ENCODE measurements at regions of chr4 and their contacts with region 1.

Region 1: DNA sequence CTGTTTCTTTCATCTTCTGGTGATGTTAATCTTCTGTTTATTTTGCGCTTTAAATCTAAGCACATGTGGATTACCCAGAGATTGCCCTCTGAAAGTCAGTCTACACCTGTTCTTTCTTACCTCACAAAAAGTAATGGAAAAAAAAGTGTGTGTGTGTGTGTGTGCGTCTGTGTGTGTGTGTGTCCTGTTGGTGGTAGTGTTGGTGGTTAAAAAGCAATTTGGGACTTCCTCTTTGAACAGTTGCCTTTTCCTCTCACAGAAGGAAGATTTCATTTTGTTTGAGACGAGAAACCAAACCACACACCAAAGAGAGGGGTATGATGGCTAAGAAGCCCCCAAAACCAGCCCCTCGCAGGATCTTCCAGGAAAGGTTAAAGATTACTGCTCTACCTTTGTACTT is at the start of gene STAP1:
- DNase-seq: peak in 2 of 9 experiments; percentile 40 to 61
- ATAC-seq: peak; percentile 56
- H3K4me3 ChIP-seq: peak within 1 kb of the TSS in 1 of 2 experiments; percentile 35
- H3K4me3 Mint-ChIP-seq: peak within 1 kb of the TSS; percentile 73
- H3K27ac ChIP-seq: no peak within 1 kb of the TSS
- H3K27ac Mint-ChIP-seq: peak within 1 kb of the TSS; percentile 65
- H3K4me1 ChIP-seq: peaks cover 10% of the 10 kb centered on the region
- H3K4me1 Mint-ChIP-seq: peaks cover 15% of the 10 kb centered on the region
- H3K27me3 ChIP-seq: no peaks in the 10 kb centered on the region
- H3K27me3 Mint-ChIP-seq: no peaks in the 10 kb centered on the region
- CTCF ChIP-seq: no peak
- total RNA-seq, gene STAP1: 1.0 to 1.3 TPM

Region 2: DNA sequence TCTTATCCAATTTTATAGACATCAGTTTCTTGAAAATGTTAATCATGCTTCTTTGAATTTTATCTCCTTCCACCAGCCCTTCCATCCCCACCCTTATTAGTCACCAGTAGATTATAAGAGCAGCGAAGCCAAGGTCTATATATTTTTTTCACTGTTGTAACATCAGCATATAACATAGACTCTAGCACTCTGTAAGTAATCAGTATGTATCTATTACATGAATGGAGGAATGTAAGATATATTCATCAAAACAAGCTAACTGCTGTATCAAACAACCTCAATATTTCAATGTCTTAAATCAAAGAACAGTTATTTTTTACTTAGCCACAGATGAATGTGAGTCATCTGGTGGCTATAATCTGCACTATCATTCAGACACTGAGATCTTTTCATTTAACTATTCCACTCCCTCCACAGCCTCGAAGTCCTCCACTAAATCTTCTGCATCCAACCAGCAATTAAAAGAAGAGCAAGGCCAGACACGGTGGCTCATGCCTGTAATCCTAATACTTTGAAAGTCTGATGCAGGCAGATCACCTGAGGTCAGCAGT is 192.1 kb before region 1 on chr4:
- CTCF ChIA-PET with region 1: no interaction called
- POLR2A ChIA-PET with region 1: no interaction called
- intact Hi-C with region 1: no loop called
- DNase-seq: no peak
- ATAC-seq: no peak
- H3K4me3 ChIP-seq: no peak overlapping the region
- H3K4me3 Mint-ChIP-seq: no peak overlapping the region
- H3K27ac ChIP-seq: no peak overlapping the region
- H3K27ac Mint-ChIP-seq: no peak overlapping the region
- H3K4me1 ChIP-seq: no peaks in the 10 kb centered on the region
- H3K4me1 Mint-ChIP-seq: no peaks in the 10 kb centered on the region
- H3K27me3 ChIP-seq: no peaks in the 10 kb centered on the region
- H3K27me3 Mint-ChIP-seq: peaks cover 17% of the 10 kb centered on the region
- CTCF ChIP-seq: no peak

Region 3: GRCh38 chr4:67573193-67573592 is 14.7 kb after region 1 on chr4:
- CTCF ChIA-PET with region 1: no interaction called
- POLR2A ChIA-PET with region 1: no interaction called
- intact Hi-C with region 1: loop called in 1 of 2 experiments (anchors 2 kb)
- DNase-seq: no peak
- ATAC-seq: no peak
- H3K4me3 ChIP-seq: no peak overlapping the region
- H3K4me3 Mint-ChIP-seq: no peak overlapping the region
- H3K27ac ChIP-seq: no peak overlapping the region
- H3K27ac Mint-ChIP-seq: peak overlapping the region; percentile 8
- H3K4me1 ChIP-seq: peaks cover 8% of the 10 kb centered on the region
- H3K4me1 Mint-ChIP-seq: peaks cover 36% of the 10 kb centered on the region
- H3K27me3 ChIP-seq: no peaks in the 10 kb centered on the region
- H3K27me3 Mint-ChIP-seq: no peaks in the 10 kb centered on the region
- CTCF ChIP-seq: no peak

Region 4: DNA sequence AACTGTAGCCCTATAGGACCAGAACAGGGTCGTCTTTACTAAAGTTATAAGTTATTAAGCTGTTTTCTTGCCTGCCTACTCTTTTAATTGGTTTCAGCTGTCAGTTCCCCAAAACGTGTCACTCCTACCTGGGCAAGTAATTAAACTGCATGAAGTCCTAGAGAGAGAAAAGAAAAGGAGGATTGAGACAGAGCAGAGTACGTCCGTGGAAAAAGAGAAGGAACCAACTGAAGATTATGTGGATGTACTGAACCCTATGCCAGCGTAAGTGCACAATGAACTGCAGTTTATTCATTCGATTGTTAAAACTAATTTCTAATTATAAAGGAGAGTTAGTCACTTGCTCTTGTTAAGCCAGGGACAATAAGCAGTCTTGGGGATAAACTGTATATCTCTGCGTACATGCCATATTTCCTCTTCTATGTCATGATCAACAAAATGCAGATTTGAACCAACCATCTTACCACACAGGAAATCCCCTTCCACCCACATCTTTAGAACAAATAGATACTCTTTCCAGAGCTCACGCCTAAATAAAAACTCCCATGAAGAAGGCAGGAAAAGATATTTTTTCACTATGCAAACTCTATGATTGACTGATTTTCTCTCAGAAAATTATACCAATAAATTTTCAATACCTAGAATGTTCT is 22.8 kb after region 1 on chr4:
- CTCF ChIA-PET with region 1: no interaction called
- POLR2A ChIA-PET with region 1: no interaction called
- intact Hi-C with region 1: loop called in 1 of 2 experiments (anchors 2 kb)
- DNase-seq: peak in 2 of 9 experiments; percentile 50 to 79
- ATAC-seq: peak; percentile 91
- H3K4me3 ChIP-seq: no peak overlapping the region
- H3K4me3 Mint-ChIP-seq: peak overlapping the region; percentile 57
- H3K27ac ChIP-seq: no peak overlapping the region
- H3K27ac Mint-ChIP-seq: peak overlapping the region; percentile 37
- H3K4me1 ChIP-seq: peaks cover 22% of the 10 kb centered on the region
- H3K4me1 Mint-ChIP-seq: peaks cover 40% of the 10 kb centered on the region
- H3K27me3 ChIP-seq: no peaks in the 10 kb centered on the region
- H3K27me3 Mint-ChIP-seq: no peaks in the 10 kb centered on the region
- CTCF ChIP-seq: no peak

Region 5: DNA sequence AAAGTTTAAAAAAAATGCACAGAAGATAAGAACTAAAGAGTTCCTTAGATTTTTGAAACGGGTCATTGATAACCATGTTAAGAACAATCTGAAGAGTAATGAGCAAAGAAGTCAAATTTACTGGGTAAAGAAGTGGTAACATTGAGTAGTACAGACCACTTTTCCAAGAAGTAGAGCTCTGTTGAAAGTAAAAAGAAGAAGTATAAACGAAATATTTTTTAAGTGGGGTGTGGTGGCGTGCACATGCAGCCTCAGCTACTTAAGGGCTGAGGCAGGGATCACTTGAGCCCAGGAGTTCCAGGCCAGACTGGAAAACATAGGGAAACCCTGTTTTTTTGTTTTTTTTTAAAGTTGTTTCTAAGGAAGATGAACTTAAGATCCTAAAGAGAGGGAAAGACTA is 74.0 kb after region 1 on chr4:
- CTCF ChIA-PET with region 1: no interaction called
- POLR2A ChIA-PET with region 1: no interaction called
- intact Hi-C with region 1: no loop called
- DNase-seq: no peak
- ATAC-seq: no peak
- H3K4me3 ChIP-seq: no peak overlapping the region
- H3K4me3 Mint-ChIP-seq: no peak overlapping the region
- H3K27ac ChIP-seq: no peak overlapping the region
- H3K27ac Mint-ChIP-seq: no peak overlapping the region
- H3K4me1 ChIP-seq: no peaks in the 10 kb centered on the region
- H3K4me1 Mint-ChIP-seq: no peaks in the 10 kb centered on the region
- H3K27me3 ChIP-seq: no peaks in the 10 kb centered on the region
- H3K27me3 Mint-ChIP-seq: no peaks in the 10 kb centered on the region
- CTCF ChIP-seq: no peak

Measured in CD8-positive, alpha-beta T cell (primary cell).